ENCODE measurements at regions of chr2 and their contacts with region 1.

Region 1: GRCh38 chr2:37672104-37672869 is 845 bp upstream of the CDC42EP3 start:
- DNase-seq: peak; percentile 48 to 74 (median 62)
- ATAC-seq: peak; percentile 68
- H3K4me3 ChIP-seq: peak overlapping the region; percentile 86
- H3K4me3 Mint-ChIP-seq: peak overlapping the region; percentile 78 to 96 (median 89)
- H3K27ac ChIP-seq: peak overlapping the region; percentile 72
- H3K27ac Mint-ChIP-seq: peak overlapping the region in 8 of 9 donors; percentile 65 to 91 (median 84)
- H3K4me1 ChIP-seq: peaks cover 18 to 25% of the 10 kb centered on the region in 2 donors
- H3K4me1 Mint-ChIP-seq: peaks cover 27 to 42% (median 41%) of the 10 kb centered on the region in 7 donors
- H3K27me3 ChIP-seq: no peaks in the 10 kb centered on the region
- H3K27me3 Mint-ChIP-seq: peaks cover 0 to 2% (median 0%) of the 10 kb centered on the region in 5 donors

Region 2: GRCh38 chr2:37083873-37084794 is 588.2 kb before region 1 on chr2 and contains the starts of genes GPATCH11 and HEATR5B:
- CTCF ChIA-PET with region 1: no interaction called
- POLR2A ChIA-PET with region 1: no interaction called
- intact Hi-C with region 1: loop called in 1 of 2 experiments (anchors 10 kb)
- DNase-seq: peak; percentile 76 to 94 (median 92)
- ATAC-seq: peak; percentile 87
- H3K4me3 ChIP-seq: peak within 1 kb of the TSS; percentile 74
- H3K4me3 Mint-ChIP-seq: peak within 1 kb of the TSS in 1 of 10 donors; percentile 64
- H3K27ac ChIP-seq: peak within 1 kb of the TSS; percentile 85
- H3K27ac Mint-ChIP-seq: no peak within 1 kb of the TSS
- H3K4me1 ChIP-seq: peaks cover 35 to 45% of the 10 kb centered on the region in 2 donors
- H3K4me1 Mint-ChIP-seq: peaks cover 8 to 62% (median 50%) of the 10 kb centered on the region in 7 donors
- H3K27me3 ChIP-seq: no peaks in the 10 kb centered on the region
- H3K27me3 Mint-ChIP-seq: no peaks in the 10 kb centered on the region
- total RNA-seq, gene GPATCH11: 6.0 to 19.0 (median 11.1) TPM
- total RNA-seq, gene HEATR5B: 25.2 to 50.5 (median 39.3) TPM

Region 3: GRCh38 chr2:37215250-37215649 is 457.0 kb before region 1 on chr2:
- CTCF ChIA-PET with region 1: no interaction called
- POLR2A ChIA-PET with region 1: no interaction called
- intact Hi-C with region 1: no loop called
- DNase-seq: no peak
- ATAC-seq: no peak
- H3K4me3 ChIP-seq: no peak overlapping the region
- H3K4me3 Mint-ChIP-seq: no peak overlapping the region
- H3K27ac ChIP-seq: no peak overlapping the region
- H3K27ac Mint-ChIP-seq: peak overlapping the region in 4 of 9 donors; percentile 6 to 65 (median 17)
- H3K4me1 ChIP-seq: no peaks in the 10 kb centered on the region
- H3K4me1 Mint-ChIP-seq: peaks cover 0 to 11% (median 6%) of the 10 kb centered on the region in 7 donors
- H3K27me3 ChIP-seq: no peaks in the 10 kb centered on the region
- H3K27me3 Mint-ChIP-seq: no peaks in the 10 kb centered on the region

Region 4: GRCh38 chr2:37389989-37390765 is 282.1 kb before region 1 on chr2:
- CTCF ChIA-PET with region 1: interaction called, 3 read pairs
- POLR2A ChIA-PET with region 1: no interaction called
- intact Hi-C with region 1: loop called (anchors 1 to 5 kb)
- DNase-seq: peak in 8 of 9 donors; percentile 30 to 72 (median 52)
- ATAC-seq: peak; percentile 94
- H3K4me3 ChIP-seq: peak overlapping the region; percentile 19
- H3K4me3 Mint-ChIP-seq: peak overlapping the region in 9 of 10 donors; percentile 43 to 68 (median 55)
- H3K27ac ChIP-seq: peak overlapping the region; percentile 8
- H3K27ac Mint-ChIP-seq: peak overlapping the region in 7 of 9 donors; percentile 72 to 84 (median 80)
- H3K4me1 ChIP-seq: peaks cover 25 to 27% of the 10 kb centered on the region in 2 donors
- H3K4me1 Mint-ChIP-seq: peaks cover 0 to 18% (median 0%) of the 10 kb centered on the region in 7 donors
- H3K27me3 ChIP-seq: no peaks in the 10 kb centered on the region
- H3K27me3 Mint-ChIP-seq: peaks cover 0 to 19% (median 0%) of the 10 kb centered on the region in 5 donors

Region 5: DNA sequence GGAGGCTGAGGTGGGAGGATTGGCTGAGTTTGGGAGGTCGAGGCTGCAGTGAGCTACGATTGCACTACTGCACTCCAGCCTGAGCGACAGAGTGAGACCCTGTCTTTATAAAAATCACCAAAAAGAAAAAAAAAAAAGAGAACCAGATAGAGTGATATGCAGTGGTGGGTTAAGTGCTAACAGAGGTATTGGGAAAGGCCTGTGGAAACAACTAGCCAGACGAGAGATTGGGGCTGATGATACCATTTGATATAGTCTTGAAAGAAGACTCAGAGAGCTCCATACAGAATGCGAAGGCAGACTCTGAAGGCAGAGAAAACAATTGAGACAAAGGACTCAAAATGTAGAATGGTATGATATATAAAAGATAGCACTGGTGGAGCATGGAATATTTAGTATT is 135.0 kb before region 1 on chr2:
- CTCF ChIA-PET with region 1: no interaction called
- POLR2A ChIA-PET with region 1: interaction called, 3 read pairs
- intact Hi-C with region 1: loop called (anchors 2 to 5 kb)
- DNase-seq: no peak
- ATAC-seq: no peak
- H3K4me3 ChIP-seq: no peak overlapping the region
- H3K4me3 Mint-ChIP-seq: no peak overlapping the region
- H3K27ac ChIP-seq: no peak overlapping the region
- H3K27ac Mint-ChIP-seq: no peak overlapping the region
- H3K4me1 ChIP-seq: no peaks in the 10 kb centered on the region
- H3K4me1 Mint-ChIP-seq: peaks cover 0 to 5% (median 3%) of the 10 kb centered on the region in 7 donors
- H3K27me3 ChIP-seq: no peaks in the 10 kb centered on the region
- H3K27me3 Mint-ChIP-seq: peaks cover 0 to 28% (median 0%) of the 10 kb centered on the region in 5 donors

Region 6: DNA sequence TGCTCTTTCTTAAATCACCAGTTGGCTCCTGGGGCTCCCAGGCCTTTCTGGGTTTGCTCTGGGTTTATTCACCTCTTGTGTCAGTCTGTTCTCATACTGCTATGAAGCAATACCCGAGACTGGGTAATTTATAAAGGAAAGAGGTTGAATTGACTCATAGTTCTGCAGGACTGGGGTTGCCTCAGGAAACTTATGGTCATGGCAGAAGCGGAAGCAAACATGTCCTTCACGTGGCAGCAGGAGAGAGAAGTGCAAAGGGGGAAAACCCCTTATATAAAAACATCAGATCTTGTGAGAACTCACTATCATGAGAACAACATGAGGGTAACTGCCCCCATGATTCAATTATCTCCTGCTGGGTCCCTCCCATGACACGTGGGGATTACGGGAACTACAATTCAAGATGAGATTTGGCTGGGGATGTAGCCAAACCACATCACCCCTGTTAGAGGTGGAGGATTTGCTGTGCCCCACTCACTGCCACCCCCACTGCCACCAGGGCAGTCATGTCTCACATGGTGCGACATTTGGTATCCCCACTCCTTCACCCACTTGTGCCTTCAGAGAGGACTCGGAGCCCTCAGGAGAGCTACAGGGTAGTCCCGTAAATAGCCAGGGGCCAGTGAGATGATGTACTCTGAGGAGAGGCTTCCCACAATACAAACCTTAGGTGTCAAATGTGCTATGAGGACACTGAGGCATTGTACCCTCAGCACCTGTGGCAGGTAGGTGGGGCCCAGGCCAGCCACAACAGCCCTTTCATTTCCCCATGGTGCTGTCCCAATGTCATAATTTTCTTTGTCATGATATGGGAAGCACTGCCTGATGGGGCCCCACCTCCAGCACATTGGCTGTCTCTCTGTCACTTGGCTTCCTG is 36.5 kb before region 1 on chr2:
- CTCF ChIA-PET with region 1: no interaction called
- POLR2A ChIA-PET with region 1: interaction called, 3 read pairs
- intact Hi-C with region 1: loop called (anchors 1 to 2 kb)
- DNase-seq: peak; percentile 20 to 77 (median 39)
- ATAC-seq: peak; percentile 87
- H3K4me3 ChIP-seq: no peak overlapping the region
- H3K4me3 Mint-ChIP-seq: peak overlapping the region in 8 of 10 donors; percentile 13 to 49 (median 40)
- H3K27ac ChIP-seq: peak overlapping the region; percentile 41
- H3K27ac Mint-ChIP-seq: peak overlapping the region; percentile 5 to 84 (median 80)
- H3K4me1 ChIP-seq: peaks cover 24 to 58% of the 10 kb centered on the region in 2 donors
- H3K4me1 Mint-ChIP-seq: peaks cover 31 to 70% (median 36%) of the 10 kb centered on the region in 7 donors
- H3K27me3 ChIP-seq: no peaks in the 10 kb centered on the region
- H3K27me3 Mint-ChIP-seq: peaks cover 0 to 13% (median 0%) of the 10 kb centered on the region in 5 donors

Region 7: GRCh38 chr2:37692711-37693110 is 20.4 kb after region 1 on chr2:
- CTCF ChIA-PET with region 1: no interaction called
- POLR2A ChIA-PET with region 1: no interaction called
- intact Hi-C with region 1: no loop called
- DNase-seq: no peak
- ATAC-seq: no peak
- H3K4me3 ChIP-seq: no peak overlapping the region
- H3K4me3 Mint-ChIP-seq: no peak overlapping the region
- H3K27ac ChIP-seq: no peak overlapping the region
- H3K27ac Mint-ChIP-seq: peak overlapping the region in 1 of 9 donors; percentile 5
- H3K4me1 ChIP-seq: no peaks in the 10 kb centered on the region
- H3K4me1 Mint-ChIP-seq: no peaks in the 10 kb centered on the region
- H3K27me3 ChIP-seq: no peaks in the 10 kb centered on the region
- H3K27me3 Mint-ChIP-seq: peaks cover 0 to 37% (median 5%) of the 10 kb centered on the region in 5 donors

Region 8: GRCh38 chr2:37711308-37711731 is 39.0 kb after region 1 on chr2:
- CTCF ChIA-PET with region 1: no interaction called
- POLR2A ChIA-PET with region 1: no interaction called
- intact Hi-C with region 1: loop called in 1 of 2 experiments (anchors 1 kb)
- DNase-seq: peak in 4 of 9 donors; percentile 3 to 15 (median 10)
- ATAC-seq: peak; percentile 76
- H3K4me3 ChIP-seq: no peak overlapping the region
- H3K4me3 Mint-ChIP-seq: peak overlapping the region in 6 of 10 donors; percentile 27 to 58 (median 48)
- H3K27ac ChIP-seq: no peak overlapping the region
- H3K27ac Mint-ChIP-seq: peak overlapping the region in 7 of 9 donors; percentile 6 to 69 (median 31)
- H3K4me1 ChIP-seq: peaks cover 14 to 28% of the 10 kb centered on the region in 2 donors
- H3K4me1 Mint-ChIP-seq: peaks cover 15 to 47% (median 22%) of the 10 kb centered on the region in 7 donors
- H3K27me3 ChIP-seq: no peaks in the 10 kb centered on the region
- H3K27me3 Mint-ChIP-seq: peaks cover 0 to 6% (median 0%) of the 10 kb centered on the region in 5 donors

Region 9: DNA sequence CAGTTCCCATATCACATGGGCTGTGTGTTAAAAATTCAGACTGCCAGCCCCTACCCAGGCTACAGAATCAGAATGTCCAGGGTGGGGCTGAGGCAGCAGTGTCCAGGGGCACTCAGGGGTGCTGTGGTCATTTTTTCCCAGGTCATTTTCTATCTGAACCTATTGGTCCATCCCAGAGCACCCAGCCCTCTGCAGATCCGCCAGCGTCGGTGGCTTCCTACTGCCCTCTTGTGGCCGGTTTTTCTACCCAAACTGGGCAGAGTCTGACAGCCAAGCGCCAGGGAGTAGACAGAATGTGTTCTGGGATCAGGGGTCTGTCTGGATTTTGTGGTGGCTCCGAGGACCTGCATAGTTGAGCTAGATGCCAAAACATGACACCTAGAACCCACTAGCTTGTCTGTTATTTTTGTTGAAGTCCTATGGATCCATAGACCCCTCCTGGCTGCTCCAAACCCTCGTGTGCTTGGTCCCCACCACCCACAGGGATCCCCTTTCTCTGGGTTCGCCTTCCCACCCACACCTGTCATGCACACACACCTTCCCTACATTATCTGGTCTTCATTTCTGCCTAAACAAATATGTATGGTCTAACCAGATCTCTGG is 218.7 kb after region 1 on chr2:
- CTCF ChIA-PET with region 1: no interaction called
- POLR2A ChIA-PET with region 1: no interaction called
- intact Hi-C with region 1: no loop called
- DNase-seq: peak; percentile 17 to 63 (median 44)
- ATAC-seq: peak; percentile 72
- H3K4me3 ChIP-seq: no peak overlapping the region
- H3K4me3 Mint-ChIP-seq: peak overlapping the region in 6 of 10 donors; percentile 12 to 75 (median 55)
- H3K27ac ChIP-seq: no peak overlapping the region
- H3K27ac Mint-ChIP-seq: peak overlapping the region in 2 of 9 donors; percentile 35 to 71
- H3K4me1 ChIP-seq: peaks cover 25 to 33% of the 10 kb centered on the region in 2 donors
- H3K4me1 Mint-ChIP-seq: peaks cover 24 to 58% (median 45%) of the 10 kb centered on the region in 7 donors
- H3K27me3 ChIP-seq: no peaks in the 10 kb centered on the region
- H3K27me3 Mint-ChIP-seq: peaks cover 0 to 29% (median 2%) of the 10 kb centered on the region in 5 donors

Region 10: DNA sequence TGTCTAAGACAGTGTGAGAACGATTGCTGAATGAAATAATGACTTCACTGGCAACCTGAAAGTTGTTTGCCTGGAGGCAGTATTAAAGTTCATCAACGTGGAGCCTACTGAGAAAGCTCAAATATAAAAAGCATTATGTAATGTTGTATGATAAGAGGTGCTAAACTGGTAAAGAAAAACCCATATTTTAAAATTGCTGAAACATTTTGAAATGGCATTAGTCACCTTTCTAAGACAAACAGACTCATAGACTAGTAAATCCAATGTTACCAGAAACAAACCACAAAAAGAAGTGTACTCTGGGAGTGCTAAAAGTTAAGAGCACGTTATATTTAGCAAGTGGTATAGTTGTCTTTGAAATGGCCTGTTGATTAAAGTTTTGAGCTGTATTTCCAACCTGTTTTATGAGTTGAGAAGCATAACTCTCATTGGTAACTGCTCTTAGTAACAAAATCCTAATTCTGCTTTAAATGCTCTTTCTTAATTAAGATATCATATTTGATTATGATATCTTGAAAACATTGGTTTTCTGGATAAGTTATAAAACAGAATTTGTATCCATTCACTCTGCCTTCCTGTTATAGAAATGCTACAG is 341.0 kb after region 1 on chr2:
- CTCF ChIA-PET with region 1: no interaction called
- POLR2A ChIA-PET with region 1: no interaction called
- intact Hi-C with region 1: no loop called
- DNase-seq: no peak
- ATAC-seq: no peak
- H3K4me3 ChIP-seq: no peak overlapping the region
- H3K4me3 Mint-ChIP-seq: no peak overlapping the region
- H3K27ac ChIP-seq: no peak overlapping the region
- H3K27ac Mint-ChIP-seq: no peak overlapping the region
- H3K4me1 ChIP-seq: no peaks in the 10 kb centered on the region
- H3K4me1 Mint-ChIP-seq: no peaks in the 10 kb centered on the region
- H3K27me3 ChIP-seq: no peaks in the 10 kb centered on the region
- H3K27me3 Mint-ChIP-seq: no peaks in the 10 kb centered on the region